ENCODE measurements at regions of chr11 and their contacts with region 1.

Region 1: GRCh38 chr11:74570266-74571061 is 21.9 kb upstream of the POLD3 start:
- DNase-seq: no peak
- ATAC-seq: peak in 1 of 2 donors; percentile 53
- H3K4me3 ChIP-seq: no peak overlapping the region
- H3K27ac ChIP-seq: no peak overlapping the region
- H3K4me1 ChIP-seq: no peaks in the 10 kb centered on the region
- H3K27me3 ChIP-seq: no peaks in the 10 kb centered on the region
- CTCF ChIP-seq: peak; percentile 29 to 59 (median 45)
- POLR2A ChIP-seq: no peak

Region 2: DNA sequence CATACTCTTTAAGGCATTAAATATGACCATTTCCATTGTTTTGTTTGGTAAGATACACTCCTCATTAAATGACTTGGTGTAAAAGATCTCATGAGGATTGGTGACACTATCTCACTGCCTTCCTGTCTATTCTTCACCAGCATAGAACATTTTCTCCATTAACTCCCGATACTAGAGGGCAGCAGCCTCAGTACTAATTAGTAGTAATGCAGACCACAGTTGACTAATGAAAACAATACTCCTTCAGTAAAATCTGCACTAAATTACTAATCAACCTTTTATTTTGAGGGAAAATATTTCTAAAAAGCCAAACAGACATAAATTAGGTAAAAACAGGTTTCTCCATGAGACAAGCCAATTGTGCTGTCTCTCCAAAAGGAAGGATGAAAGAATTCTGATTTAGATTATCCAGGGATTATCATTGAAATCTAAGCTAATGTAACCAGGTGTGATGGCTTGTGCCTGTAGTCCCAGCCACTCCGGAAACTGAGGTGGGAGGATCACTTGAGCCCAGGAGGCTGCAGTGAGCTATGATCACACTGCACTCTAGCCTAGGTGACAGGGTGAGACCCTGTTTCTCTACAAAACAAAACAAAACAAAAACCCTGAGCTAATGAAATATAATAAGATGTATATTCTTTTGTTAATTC is 181.7 kb before region 1 on chr11:
- in situ Hi-C with region 1: loop called in 1 of 4 experiments (anchors 10 kb)
- intact Hi-C with region 1: no loop called
- DNase-seq: peak; percentile 32 to 41
- ATAC-seq: peak; percentile 76 to 91
- H3K4me3 ChIP-seq: no peak overlapping the region
- H3K27ac ChIP-seq: no peak overlapping the region
- H3K4me1 ChIP-seq: no peaks in the 10 kb centered on the region
- H3K27me3 ChIP-seq: no peaks in the 10 kb centered on the region
- CTCF ChIP-seq: peak; percentile 60 to 79 (median 70)
- POLR2A ChIP-seq: no peak

Region 3: DNA sequence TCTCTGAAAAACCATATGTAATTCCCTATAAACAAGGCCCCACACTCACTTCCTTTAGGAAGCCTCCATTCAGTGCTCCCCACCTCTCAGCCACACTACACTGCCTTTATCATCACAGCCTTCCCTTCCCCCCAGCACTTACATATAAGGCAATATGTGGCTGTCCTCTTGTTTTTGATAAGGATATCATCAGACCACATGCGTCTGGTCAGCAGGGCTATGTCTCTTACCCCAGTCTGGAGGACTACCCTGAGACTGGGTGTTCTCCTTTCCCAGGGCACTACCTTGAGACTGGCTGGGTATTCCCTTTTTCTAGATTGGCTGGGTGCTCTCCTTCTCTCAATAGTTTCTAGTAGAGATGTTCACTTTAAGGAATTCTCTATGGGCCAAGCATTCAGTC is 110.9 kb before region 1 on chr11:
- in situ Hi-C with region 1: loop called in 3 of 4 experiments (anchors 5 to 10 kb)
- intact Hi-C with region 1: no loop called
- DNase-seq: no peak
- ATAC-seq: no peak
- H3K4me3 ChIP-seq: no peak overlapping the region
- H3K27ac ChIP-seq: no peak overlapping the region
- H3K4me1 ChIP-seq: peaks cover 0 to 5% of the 10 kb centered on the region in 2 donors
- H3K27me3 ChIP-seq: no peaks in the 10 kb centered on the region
- CTCF ChIP-seq: no peak
- POLR2A ChIP-seq: no peak

Region 4: GRCh38 chr11:74520927-74521665 is 49.4 kb before region 1 on chr11:
- in situ Hi-C with region 1: no loop called
- intact Hi-C with region 1: no loop called
- DNase-seq: no peak
- ATAC-seq: no peak
- H3K4me3 ChIP-seq: no peak overlapping the region
- H3K27ac ChIP-seq: no peak overlapping the region
- H3K4me1 ChIP-seq: no peaks in the 10 kb centered on the region
- H3K27me3 ChIP-seq: no peaks in the 10 kb centered on the region
- CTCF ChIP-seq: no peak
- POLR2A ChIP-seq: no peak

Region 5: GRCh38 chr11:74534216-74534950 is 36.1 kb before region 1 on chr11:
- in situ Hi-C with region 1: no loop called
- intact Hi-C with region 1: no loop called
- DNase-seq: no peak
- ATAC-seq: no peak
- H3K4me3 ChIP-seq: no peak overlapping the region
- H3K27ac ChIP-seq: no peak overlapping the region
- H3K4me1 ChIP-seq: no peaks in the 10 kb centered on the region
- H3K27me3 ChIP-seq: no peaks in the 10 kb centered on the region
- CTCF ChIP-seq: no peak
- POLR2A ChIP-seq: no peak

Region 6: GRCh38 chr11:74650498-74650897 is 80.0 kb after region 1 on chr11:
- in situ Hi-C with region 1: no loop called
- intact Hi-C with region 1: no loop called
- DNase-seq: no peak
- ATAC-seq: peak in 1 of 2 donors; percentile 30
- H3K4me3 ChIP-seq: no peak overlapping the region
- H3K27ac ChIP-seq: no peak overlapping the region
- H3K4me1 ChIP-seq: no peaks in the 10 kb centered on the region
- H3K27me3 ChIP-seq: no peaks in the 10 kb centered on the region
- CTCF ChIP-seq: no peak
- POLR2A ChIP-seq: no peak

Region 7: DNA sequence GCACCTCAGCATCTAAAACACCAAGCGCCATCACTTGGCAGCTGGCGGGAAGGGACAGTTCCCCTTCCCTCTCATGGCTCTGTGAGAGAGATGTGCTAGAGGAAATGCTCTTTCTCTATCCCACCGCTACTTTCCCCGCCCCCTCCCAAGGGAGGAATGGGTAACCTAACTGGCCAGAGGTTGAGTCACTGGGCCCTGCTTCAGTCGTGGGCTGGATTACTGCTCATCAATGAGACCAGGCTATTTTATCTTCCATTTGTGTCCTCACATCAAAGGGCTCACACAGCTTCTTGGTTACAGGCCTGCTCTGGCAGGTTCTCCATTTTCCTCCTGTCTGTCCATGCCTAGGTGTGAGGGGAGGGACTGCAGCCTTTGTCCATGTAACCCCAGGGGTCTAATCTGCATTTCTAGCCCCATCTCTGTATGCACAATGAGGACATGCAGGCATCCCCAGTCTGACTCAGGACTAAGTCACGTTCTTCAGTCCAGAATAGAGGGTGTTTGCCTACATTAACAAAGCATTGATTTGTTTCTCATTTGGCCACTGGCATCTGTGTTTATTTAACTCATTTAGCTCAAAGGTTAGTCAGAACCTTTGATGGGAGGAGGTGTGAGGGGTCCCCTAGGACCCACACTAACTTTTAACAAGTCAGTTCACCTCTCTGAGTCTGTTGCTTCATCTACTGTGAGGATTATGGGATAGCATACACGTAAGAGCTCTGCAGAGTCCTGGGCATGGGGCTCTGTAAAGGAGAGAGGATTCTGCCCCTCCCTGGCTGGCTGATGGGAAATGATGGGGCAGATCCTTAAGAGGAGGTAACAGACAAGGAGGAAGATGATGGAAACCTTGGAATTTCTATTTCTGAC is 279.3 kb after region 1 on chr11:
- in situ Hi-C with region 1: no loop called
- intact Hi-C with region 1: no loop called
- DNase-seq: no peak
- ATAC-seq: no peak
- H3K4me3 ChIP-seq: no peak overlapping the region
- H3K27ac ChIP-seq: no peak overlapping the region
- H3K4me1 ChIP-seq: no peaks in the 10 kb centered on the region
- H3K27me3 ChIP-seq: no peaks in the 10 kb centered on the region
- CTCF ChIP-seq: no peak
- POLR2A ChIP-seq: no peak

Measured in gastrocnemius medialis (tissue), 4 donors.